A549 (cell line): ENCODE measurements at regions of chr19 and their contacts with region 1.

Region 1: DNA sequence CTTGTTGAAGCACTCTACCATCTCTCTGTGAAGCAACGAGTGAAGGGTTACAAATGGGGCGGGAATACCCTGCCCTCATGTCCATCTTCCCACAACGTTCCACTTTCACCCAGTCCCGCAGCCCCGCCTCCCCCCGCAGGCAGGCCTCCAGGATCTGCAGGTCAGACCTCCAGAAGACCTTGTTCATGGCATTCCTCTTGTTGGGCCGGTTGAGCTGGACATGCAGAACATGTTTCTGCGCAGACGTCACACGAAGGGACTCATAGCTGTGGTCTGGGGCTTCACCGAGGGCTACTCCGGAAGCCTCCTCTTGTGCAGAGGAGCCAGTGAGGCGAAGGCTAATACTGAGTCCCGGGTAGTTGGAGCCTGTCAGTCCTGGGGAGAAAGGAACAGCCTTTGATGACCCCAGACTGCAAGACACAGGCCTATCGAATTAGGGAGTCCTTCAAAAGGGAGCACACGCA is 420 bp downstream of the ECH1 start:
- DNase-seq: peak; percentile 73 to 78
- ATAC-seq: peak; percentile 57 to 58
- H3K4me3 ChIP-seq: peak overlapping the region; percentile 55
- H3K27ac ChIP-seq: peak overlapping the region; percentile 88
- H3K4me1 ChIP-seq: peaks cover 49% of the 10 kb centered on the region
- CTCF ChIP-seq: no peak
- EP300 ChIP-seq: no peak
- POLR2A ChIP-seq: no peak
- RAD21 ChIP-seq: no peak

Region 2: DNA sequence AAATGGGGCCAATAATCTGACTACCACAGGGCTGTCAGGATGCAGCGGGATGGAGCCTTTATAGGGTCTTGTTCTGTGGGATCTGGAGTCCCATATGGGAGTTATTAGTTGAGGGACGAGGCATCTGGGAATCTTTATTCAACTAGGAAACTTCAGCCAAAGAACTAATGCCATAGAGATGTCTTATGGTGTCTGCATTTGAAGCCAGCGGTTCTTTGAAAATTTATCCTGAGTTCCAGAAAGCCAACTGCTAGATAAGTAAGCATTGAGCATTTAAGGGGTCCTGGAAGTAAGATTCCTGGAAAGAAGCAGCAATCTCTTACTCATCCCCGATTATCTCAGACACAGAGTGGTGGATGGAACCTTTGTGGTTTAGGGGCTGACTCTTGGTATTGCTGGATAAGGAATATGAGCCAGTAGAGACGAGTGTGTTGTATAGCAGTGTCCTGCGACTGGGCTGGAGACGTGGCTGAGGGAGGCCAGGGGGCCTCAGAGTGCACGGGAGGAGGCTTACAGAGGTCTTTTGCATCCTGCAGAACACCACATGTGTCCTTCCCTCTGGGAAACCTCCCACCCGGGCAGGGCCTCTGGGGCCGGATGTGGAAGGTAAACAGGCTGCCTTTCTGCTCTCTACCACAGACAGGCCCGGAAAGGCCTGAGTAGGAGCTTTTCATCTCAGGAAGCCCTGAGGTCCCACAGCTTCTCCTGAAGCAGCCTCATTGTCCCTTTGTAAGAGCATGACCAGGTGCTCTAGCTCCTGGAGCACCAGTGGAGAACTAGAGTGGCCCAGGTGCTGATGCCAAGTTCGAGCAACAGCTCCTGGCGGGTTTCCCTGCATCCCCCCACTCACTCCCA is 154.9 kb before region 1 on chr19:
- CTCF ChIA-PET with region 1: no interaction called
- POLR2A ChIA-PET with region 1: no interaction called
- DNase-seq: no peak
- ATAC-seq: no peak; a peak in 1 of 6 replicates
- H3K4me3 ChIP-seq: no peak overlapping the region
- H3K27ac ChIP-seq: peak overlapping the region; percentile 8 to 93; a peak in 5 of 6 replicates
- H3K4me1 ChIP-seq: peaks cover 90% of the 10 kb centered on the region
- CTCF ChIP-seq: no peak
- EP300 ChIP-seq: no peak
- POLR2A ChIP-seq: no peak
- RAD21 ChIP-seq: no peak

Region 3: GRCh38 chr19:38736036-38736412 is 95.2 kb before region 1 on chr19:
- CTCF ChIA-PET with region 1: interaction called, 7 read pairs
- POLR2A ChIA-PET with region 1: interaction called, 10 read pairs
- DNase-seq: peak; percentile 80 to 81
- ATAC-seq: peak; percentile 11 to 53
- H3K4me3 ChIP-seq: peak overlapping the region; percentile 49
- H3K27ac ChIP-seq: peak overlapping the region; percentile 70 to 88
- H3K4me1 ChIP-seq: peaks cover 57% of the 10 kb centered on the region
- CTCF ChIP-seq: 0 out of 3 replicates have a peak, but pooled peaks have one; percentile 12
- EP300 ChIP-seq: no peak
- POLR2A ChIP-seq: peak; percentile 43; the same call in 1 of the 2 replicates
- RAD21 ChIP-seq: peak; percentile 13 to 43; a peak in 4 of 5 replicates

Region 4: DNA sequence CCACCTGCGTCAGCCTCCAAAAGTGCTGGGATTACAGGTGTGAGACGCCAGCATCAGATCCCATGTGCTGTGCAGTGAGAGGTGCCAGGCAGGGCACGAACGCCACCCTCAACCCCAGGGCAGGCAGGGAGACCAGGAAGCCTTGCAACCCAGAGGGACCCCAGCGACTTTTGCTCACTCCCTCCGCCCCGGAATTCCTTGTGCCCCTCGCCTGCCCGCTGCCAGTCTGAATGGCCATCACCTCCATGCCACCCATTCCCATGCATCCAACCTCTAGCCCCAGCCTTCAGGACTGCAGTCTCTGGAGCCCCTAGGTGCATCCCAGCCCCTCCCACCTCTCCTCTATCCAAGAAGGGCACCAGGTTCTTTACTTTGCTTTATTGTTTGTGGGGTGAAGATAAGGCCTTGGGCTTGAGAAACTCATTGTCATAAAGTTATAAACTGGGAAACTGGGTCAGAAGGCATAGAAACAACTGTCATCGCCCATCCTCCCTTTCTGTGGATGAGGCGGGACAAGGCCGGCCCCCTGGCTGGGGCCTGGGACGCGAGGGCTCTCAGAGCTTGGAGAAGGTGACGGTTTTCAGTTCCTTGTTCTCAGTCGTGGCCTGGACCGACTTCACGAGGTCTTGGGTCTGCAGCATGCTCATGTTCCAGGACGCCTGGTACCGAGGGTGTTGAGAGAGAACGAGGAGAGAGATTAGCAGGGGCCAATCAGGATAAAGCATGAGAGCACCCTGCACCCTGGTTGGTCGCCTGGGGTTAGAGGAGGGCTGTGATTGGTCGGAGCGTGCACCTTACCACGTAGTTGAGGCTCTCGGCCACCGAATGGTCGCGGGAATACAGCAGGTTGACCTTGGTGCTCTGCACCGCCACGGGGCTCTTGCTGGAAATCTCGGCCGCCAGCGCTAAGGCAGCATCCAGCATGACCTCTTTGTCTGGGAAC is 15.8 kb before region 1 on chr19:
- CTCF ChIA-PET with region 1: interaction called, 20 read pairs
- POLR2A ChIA-PET with region 1: interaction called, 7 read pairs
- DNase-seq: no peak
- ATAC-seq: peak; percentile 17 to 44; a peak in 3 of 6 replicates
- H3K4me3 ChIP-seq: no peak overlapping the region
- H3K27ac ChIP-seq: no peak overlapping the region
- H3K4me1 ChIP-seq: peaks cover 19% of the 10 kb centered on the region
- CTCF ChIP-seq: no peak
- EP300 ChIP-seq: no peak
- POLR2A ChIP-seq: no peak
- RAD21 ChIP-seq: no peak

Region 5: DNA sequence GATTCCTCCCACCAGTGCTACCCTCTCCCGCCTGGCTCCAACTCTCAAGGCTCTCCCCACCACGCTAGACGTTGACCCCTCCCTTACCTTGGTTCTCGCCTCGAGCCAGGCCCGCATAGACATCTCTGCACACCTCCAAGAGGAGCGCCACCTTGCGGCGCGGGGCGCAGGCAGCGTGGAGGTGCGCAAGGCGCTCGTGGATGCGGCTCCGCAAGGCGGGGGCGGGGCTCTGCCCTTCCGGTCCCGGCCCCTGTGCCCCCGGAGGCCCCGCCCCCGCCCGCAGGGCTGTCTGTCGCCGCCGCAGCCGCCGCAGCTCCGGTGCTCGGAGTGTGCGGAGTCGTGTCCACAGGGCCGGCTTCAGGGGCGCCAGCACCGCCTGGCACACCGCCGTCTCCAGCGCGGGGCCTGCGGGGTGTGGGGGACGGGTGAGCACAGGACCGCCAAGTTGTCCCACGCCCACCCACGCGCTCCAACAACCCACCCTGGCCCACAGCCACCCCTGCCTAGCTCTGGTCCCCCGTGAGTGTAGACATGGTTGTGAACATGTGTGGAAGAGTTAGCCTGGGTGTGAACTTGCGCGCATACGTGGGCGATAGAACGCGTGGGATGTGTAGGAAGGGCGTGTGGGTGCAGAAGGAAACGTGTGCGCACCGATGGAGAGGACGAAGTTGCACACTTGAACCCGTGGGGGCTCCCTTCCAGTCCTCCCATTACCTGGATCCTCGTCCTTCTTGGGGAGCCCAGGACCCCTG is 38.9 kb after region 1 on chr19:
- CTCF ChIA-PET with region 1: interaction called, 21 read pairs
- POLR2A ChIA-PET with region 1: no interaction called
- DNase-seq: peak; percentile 89 to 93
- ATAC-seq: peak; percentile 90 to 94
- H3K4me3 ChIP-seq: peak overlapping the region; percentile 31
- H3K27ac ChIP-seq: peak overlapping the region; percentile 56 to 80
- H3K4me1 ChIP-seq: peaks cover 18% of the 10 kb centered on the region
- CTCF ChIP-seq: peak; percentile 99
- EP300 ChIP-seq: no peak
- POLR2A ChIP-seq: no peak; the same call in 1 of the 2 replicates
- RAD21 ChIP-seq: peak; percentile 73 to 88

Region 6: GRCh38 chr19:38908854-38909253 is 77.7 kb after region 1 on chr19:
- CTCF ChIA-PET with region 1: no interaction called
- POLR2A ChIA-PET with region 1: no interaction called
- DNase-seq: no peak
- ATAC-seq: no peak
- H3K4me3 ChIP-seq: no peak overlapping the region
- H3K27ac ChIP-seq: no peak overlapping the region
- H3K4me1 ChIP-seq: peaks cover 10% of the 10 kb centered on the region
- CTCF ChIP-seq: no peak
- EP300 ChIP-seq: no peak
- POLR2A ChIP-seq: no peak
- RAD21 ChIP-seq: no peak